Activated CD8-positive, alpha-beta memory T cell treated with anti-CD3 and anti-CD28 coated beads, Interleukin-2, amount 10 ng/mL, durations not matched to agents 7 days and 5 days (primary cell): ENCODE measurements at regions of chr5 and their contacts with region 1.

Region 1: DNA sequence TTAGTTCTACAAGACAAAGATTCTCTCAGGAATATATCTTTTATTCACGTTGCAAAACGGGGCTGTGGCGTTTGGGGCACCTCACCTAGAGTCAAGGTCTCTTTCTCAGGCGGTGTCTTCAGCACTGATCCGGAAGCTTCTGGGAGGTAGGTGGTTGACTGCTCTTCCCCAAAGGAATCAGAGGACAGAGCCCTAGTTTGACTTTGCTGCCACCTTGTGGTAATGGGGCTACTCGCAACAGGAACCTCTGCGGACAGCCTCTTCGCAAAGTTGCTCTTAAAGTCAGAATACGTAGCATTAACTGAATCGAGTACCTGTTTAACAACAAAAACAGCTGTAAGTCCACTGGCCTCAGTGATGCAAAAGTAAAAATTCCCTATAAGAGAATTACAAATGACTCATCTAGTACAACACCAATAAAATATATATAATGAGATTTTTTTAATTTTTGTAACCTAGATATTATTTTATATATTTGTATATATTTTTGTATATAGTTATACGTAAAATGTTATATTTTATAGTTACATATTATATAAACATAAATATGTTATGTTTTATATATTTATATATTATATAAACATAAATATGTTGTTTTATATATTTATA is 13.3 kb upstream of the GPX8 start:
- DNase-seq: peak; percentile 92
- ATAC-seq: peak; percentile 91
- H3K4me3 Mint-ChIP-seq: peak overlapping the region; percentile 38
- H3K27ac Mint-ChIP-seq: peak overlapping the region; percentile 75
- H3K4me1 Mint-ChIP-seq: peaks cover 43% of the 10 kb centered on the region
- H3K27me3 Mint-ChIP-seq: peaks cover 9% of the 10 kb centered on the region

Region 2: DNA sequence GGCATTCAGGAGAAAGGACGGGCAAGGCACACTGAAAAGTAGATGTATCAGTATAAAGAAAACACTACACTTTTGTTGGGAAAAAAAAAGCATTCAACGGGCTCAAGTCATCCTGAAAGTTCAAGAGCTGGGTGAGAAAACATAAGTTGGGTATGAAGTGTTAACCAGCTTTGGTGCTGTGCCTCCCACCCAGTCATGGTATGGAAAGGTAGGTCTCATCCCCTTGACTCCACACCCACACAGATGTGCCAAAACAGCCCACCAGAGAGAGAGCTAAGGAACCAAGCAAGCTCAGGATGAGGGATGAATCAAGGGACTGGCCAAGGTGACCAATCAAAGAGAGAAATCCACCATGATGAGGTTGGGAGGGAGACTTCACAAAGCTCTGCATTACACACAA is 215.9 kb before region 1 on chr5:
- CTCF ChIA-PET with region 1: interaction called, 10 read pairs
- DNase-seq: peak; percentile 47
- ATAC-seq: peak; percentile 48
- H3K4me3 Mint-ChIP-seq: no peak overlapping the region
- H3K27ac Mint-ChIP-seq: no peak overlapping the region
- H3K4me1 Mint-ChIP-seq: peaks cover 15% of the 10 kb centered on the region
- H3K27me3 Mint-ChIP-seq: peaks cover 24% of the 10 kb centered on the region

Region 3: GRCh38 chr5:54959673-54960418 is 186.8 kb before region 1 on chr5:
- CTCF ChIA-PET with region 1: interaction called, 10 read pairs
- DNase-seq: peak; percentile 57
- ATAC-seq: no peak
- H3K4me3 Mint-ChIP-seq: no peak overlapping the region
- H3K27ac Mint-ChIP-seq: no peak overlapping the region
- H3K4me1 Mint-ChIP-seq: peaks cover 2% of the 10 kb centered on the region
- H3K27me3 Mint-ChIP-seq: peaks cover 3% of the 10 kb centered on the region

Region 4: DNA sequence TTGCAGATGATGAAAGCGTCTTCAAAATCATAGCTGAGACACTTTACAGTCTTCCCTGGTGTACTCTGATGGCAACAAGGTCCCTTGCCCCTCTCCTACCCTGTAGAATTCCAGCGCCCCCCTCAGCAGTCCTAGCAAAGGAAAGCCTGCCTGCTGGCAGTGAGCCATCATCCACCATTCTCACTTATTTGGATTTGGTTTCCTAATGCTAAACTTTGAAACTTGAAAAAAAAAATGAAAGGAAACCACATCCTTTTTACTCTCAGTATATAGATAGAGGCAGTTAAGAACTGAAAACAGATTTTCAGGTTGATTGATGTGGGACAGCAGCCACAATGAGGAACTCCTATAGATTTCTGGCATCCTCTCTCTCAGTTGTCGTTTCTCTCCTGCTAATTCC is 44.3 kb before region 1 on chr5 and contains the start of gene GZMA:
- CTCF ChIA-PET with region 1: interaction called, 50 read pairs
- DNase-seq: peak; percentile 68
- ATAC-seq: peak; percentile 62
- H3K4me3 Mint-ChIP-seq: peak within 1 kb of the TSS; percentile 91
- H3K27ac Mint-ChIP-seq: peak within 1 kb of the TSS; percentile 97
- H3K4me1 Mint-ChIP-seq: peaks cover 73% of the 10 kb centered on the region
- H3K27me3 Mint-ChIP-seq: no peaks in the 10 kb centered on the region
- total RNA-seq, gene GZMA: 927 to 1,065 TPM

Region 5: GRCh38 chr5:55159763-55160492 is 13.3 kb after region 1 on chr5 and contains the start of gene GPX8:
- CTCF ChIA-PET with region 1: interaction called, 13 read pairs
- DNase-seq: no peak
- ATAC-seq: peak; percentile 76
- H3K4me3 Mint-ChIP-seq: no peak within 1 kb of the TSS
- H3K27ac Mint-ChIP-seq: no peak within 1 kb of the TSS
- H3K4me1 Mint-ChIP-seq: peaks cover 4% of the 10 kb centered on the region
- H3K27me3 Mint-ChIP-seq: peaks cover 45% of the 10 kb centered on the region
- total RNA-seq, gene GPX8: not detected